Tibial artery (tissue), 4 donors: ENCODE measurements at regions of chr6 and their contacts with region 1.

Region 1: GRCh38 chr6:165884813-165885765 is 222.0 kb upstream of the PDE10A start:
- DNase-seq: peak; percentile 74 to 77
- H3K4me3 ChIP-seq: no peak overlapping the region
- H3K27ac ChIP-seq: no peak overlapping the region
- H3K4me1 ChIP-seq: no peaks in the 10 kb centered on the region
- H3K27me3 ChIP-seq: peaks cover 0 to 2% of the 10 kb centered on the region in 2 donors
- CTCF ChIP-seq: peak; percentile 70 to 82

Region 2: DNA sequence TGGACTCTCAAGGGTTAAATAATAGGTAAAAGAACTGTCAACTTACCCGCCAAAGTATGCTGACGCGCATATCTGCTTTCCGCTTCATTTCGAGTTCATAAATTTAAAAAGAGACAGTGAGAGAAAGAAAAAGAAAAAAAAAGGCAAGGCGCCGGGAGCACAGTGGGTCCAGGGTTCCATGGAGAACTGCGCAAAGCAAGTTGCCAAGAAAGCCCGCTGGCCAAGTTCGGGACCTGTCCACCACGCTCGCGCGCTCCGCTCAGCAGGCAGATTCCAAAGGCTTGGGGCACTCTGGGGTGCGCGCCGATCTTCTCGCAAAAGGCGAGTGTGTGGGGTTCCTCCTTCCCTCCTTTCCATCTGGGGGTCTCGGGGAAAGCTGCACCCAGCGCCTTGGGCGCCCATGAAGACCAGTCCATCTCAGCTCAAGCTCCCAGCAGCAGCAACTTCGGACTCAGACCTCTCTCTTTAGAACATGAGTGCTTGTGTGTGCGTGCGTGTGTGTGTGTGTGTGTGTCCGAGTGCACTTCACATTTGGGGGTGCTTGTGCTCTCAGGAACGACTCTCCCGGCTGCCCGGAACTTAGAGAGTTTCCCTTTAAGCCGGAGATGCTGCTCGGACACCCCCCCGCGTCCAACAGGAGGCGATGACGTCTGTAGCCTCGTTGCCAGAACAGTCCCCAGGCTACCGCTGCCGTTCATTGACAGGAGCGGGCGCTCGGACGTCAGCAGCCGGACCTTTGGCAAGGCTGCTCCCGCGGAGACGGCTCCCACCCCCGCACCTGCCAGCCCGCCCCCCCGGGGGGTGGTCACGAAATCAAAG is 102.6 kb after region 1 on chr6:
- intact Hi-C with region 1: loop called (anchors 5 kb)
- DNase-seq: peak; percentile 51 to 88
- H3K4me3 ChIP-seq: peak overlapping the region; percentile 36 to 52
- H3K27ac ChIP-seq: no peak overlapping the region
- H3K4me1 ChIP-seq: peaks cover 0 to 32% (median 27%) of the 10 kb centered on the region in 4 donors
- H3K27me3 ChIP-seq: peaks cover 0 to 47% of the 10 kb centered on the region in 2 donors
- CTCF ChIP-seq: no peak

Region 3: DNA sequence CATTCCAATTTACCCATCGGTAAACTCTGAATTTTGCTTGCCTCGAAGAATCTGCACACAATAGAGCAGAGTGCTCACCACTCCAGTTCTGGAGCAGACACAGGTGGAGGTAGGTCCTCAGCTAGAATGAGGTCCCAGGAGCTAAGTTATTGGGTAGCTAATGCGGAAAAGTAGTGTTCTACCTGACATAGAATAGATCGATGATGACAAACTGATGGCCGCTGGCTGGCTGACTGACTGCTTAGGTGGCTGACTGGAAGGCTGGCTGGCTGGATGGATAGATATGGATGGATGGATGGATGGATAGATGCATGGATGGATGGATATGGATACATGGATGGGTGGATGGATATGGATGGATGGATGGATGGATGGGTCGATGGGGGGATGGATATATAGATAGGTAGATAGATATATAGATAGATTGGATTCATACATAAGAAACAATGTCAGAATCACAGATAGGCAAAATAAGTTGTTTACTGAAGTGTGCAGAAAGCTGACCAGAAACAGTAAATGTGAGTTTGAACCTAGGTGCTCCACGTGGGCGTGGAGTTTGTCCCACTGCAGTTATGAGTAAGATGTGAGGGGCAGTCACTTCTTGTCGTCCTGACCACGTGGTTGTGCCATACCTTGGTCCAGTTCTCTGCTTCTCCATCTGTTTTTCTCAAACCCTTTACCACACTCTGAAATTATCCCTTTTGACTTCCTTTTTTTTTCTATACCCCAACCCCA is 220.4 kb after region 1 on chr6:
- intact Hi-C with region 1: loop called (anchors 2 kb)
- DNase-seq: no peak
- H3K4me3 ChIP-seq: no peak overlapping the region
- H3K27ac ChIP-seq: no peak overlapping the region
- H3K4me1 ChIP-seq: no peaks in the 10 kb centered on the region
- H3K27me3 ChIP-seq: peaks cover 0 to 2% of the 10 kb centered on the region in 2 donors
- CTCF ChIP-seq: no peak